Activated CD4-positive, alpha-beta memory T cell treated with anti-CD3 and anti-CD28 coated beads, Interleukin-2, amount 10 ng/mL, durations not matched to agents 7 days and 5 days (primary cell): ENCODE measurements at regions of chr6 and their contacts with region 1.

Region 1: DNA sequence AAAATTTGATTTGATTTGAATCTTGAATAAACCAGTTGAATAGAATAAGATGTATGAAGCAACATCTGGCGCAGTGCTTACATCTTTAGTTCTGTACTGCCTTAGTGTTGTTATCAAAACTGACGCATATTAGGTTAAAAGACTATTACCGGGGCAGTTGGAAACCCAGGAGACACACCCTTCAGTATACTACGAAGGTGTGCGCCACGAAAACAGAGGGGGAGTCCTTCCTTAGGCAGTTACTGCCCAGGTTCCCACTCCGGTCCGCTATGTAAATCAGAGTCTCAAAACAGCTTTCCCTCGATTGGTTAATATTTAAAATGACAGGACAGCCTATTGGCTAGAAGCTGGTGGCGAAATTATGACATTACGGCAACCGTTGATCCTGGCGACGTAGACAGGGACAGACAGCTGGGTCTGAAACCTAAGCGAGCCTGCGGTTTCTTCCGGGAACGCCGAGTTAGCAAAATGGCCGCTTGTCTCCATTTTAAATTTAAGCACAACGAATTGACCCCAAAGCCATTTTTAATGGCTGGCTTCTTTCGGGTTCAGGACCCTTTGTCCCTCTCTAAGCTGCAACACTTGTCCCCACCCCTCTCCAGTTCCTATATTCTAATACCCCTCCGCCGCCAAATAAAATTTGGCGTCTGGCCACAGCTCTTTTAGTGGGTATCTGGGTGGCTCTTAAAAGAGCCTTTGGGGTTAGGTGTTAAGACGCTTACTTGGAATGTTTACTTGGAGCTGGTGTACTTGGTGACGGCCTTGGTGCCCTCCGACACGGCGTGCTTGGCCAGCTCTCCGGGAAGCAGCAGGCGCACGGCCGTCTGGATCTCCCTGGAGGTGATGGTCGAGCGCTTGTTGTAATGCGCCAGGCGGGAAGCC is 35.8 kb downstream of the HFE start:
- DNase-seq: peak; percentile 95
- H3K4me3 Mint-ChIP-seq: peak overlapping the region; percentile 97
- H3K27ac Mint-ChIP-seq: peak overlapping the region; percentile 100
- H3K4me1 Mint-ChIP-seq: peaks cover 40% of the 10 kb centered on the region
- H3K27me3 Mint-ChIP-seq: no peaks in the 10 kb centered on the region

Region 2: GRCh38 chr6:26054857-26055669 is 68.0 kb before region 1 on chr6:
- CTCF ChIA-PET with region 1: no interaction called
- POLR2A ChIA-PET with region 1: interaction called, 276 read pairs
- DNase-seq: peak; percentile 92
- H3K4me3 Mint-ChIP-seq: peak overlapping the region; percentile 83
- H3K27ac Mint-ChIP-seq: peak overlapping the region; percentile 99
- H3K4me1 Mint-ChIP-seq: peaks cover 37% of the 10 kb centered on the region
- H3K27me3 Mint-ChIP-seq: no peaks in the 10 kb centered on the region

Region 3: GRCh38 chr6:26103770-26104456 is 19.1 kb before region 1 on chr6:
- CTCF ChIA-PET with region 1: interaction called, 17 read pairs
- POLR2A ChIA-PET with region 1: interaction called, 204 read pairs
- DNase-seq: peak; percentile 93
- H3K4me3 Mint-ChIP-seq: peak overlapping the region; percentile 80
- H3K27ac Mint-ChIP-seq: peak overlapping the region; percentile 99
- H3K4me1 Mint-ChIP-seq: peaks cover 23% of the 10 kb centered on the region
- H3K27me3 Mint-ChIP-seq: no peaks in the 10 kb centered on the region

Region 4: DNA sequence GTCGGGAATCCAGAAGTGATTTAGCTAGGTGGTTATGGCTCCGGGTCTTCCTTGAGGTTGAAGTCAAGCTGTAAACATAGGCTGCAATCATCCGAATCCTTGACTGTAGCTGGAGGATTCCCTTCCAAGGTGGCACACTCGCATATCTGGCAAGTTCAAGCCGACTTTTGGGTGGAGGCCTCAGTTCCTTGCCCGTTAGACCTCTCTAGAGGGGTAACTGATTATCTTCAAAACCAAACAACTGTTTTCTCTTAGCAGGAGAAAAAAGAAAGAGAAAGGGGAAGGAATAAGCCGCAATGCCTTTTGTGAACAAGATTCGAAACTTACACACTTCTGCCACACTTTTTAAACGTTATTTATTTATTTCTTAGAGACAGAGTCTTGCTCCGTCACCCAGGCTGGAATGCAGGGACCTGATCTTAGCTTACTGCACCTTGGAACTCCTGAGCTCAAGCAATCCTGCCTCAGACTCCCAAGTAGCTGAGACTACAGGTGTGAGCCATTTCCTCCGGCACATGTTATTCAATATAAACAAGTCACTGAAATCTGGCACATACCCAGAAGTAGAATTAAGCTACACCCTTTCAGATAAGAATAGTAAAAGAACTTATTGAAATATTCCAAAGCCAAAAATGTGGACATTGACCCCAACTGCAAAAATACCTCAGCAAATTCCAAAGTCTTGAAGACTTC is 40.5 kb after region 1 on chr6:
- CTCF ChIA-PET with region 1: interaction called, 65 read pairs
- POLR2A ChIA-PET with region 1: interaction called, 2,087 read pairs
- DNase-seq: no peak
- H3K4me3 Mint-ChIP-seq: no peak overlapping the region
- H3K27ac Mint-ChIP-seq: peak overlapping the region; percentile 42
- H3K4me1 Mint-ChIP-seq: peaks cover 60% of the 10 kb centered on the region
- H3K27me3 Mint-ChIP-seq: no peaks in the 10 kb centered on the region

Region 5: GRCh38 chr6:26204332-26205165 is 81.5 kb after region 1 on chr6:
- CTCF ChIA-PET with region 1: interaction called, 4 read pairs
- POLR2A ChIA-PET with region 1: interaction called, 499 read pairs
- DNase-seq: peak; percentile 90
- H3K4me3 Mint-ChIP-seq: no peak overlapping the region
- H3K27ac Mint-ChIP-seq: no peak overlapping the region
- H3K4me1 Mint-ChIP-seq: peaks cover 35% of the 10 kb centered on the region
- H3K27me3 Mint-ChIP-seq: no peaks in the 10 kb centered on the region

Region 6: GRCh38 chr6:26285143-26286134 is 162.4 kb after region 1 on chr6:
- CTCF ChIA-PET with region 1: no interaction called
- POLR2A ChIA-PET with region 1: interaction called, 54 read pairs
- DNase-seq: peak; percentile 98
- H3K4me3 Mint-ChIP-seq: peak overlapping the region; percentile 83
- H3K27ac Mint-ChIP-seq: peak overlapping the region; percentile 96
- H3K4me1 Mint-ChIP-seq: peaks cover 39% of the 10 kb centered on the region
- H3K27me3 Mint-ChIP-seq: peaks cover 4% of the 10 kb centered on the region

Region 7: DNA sequence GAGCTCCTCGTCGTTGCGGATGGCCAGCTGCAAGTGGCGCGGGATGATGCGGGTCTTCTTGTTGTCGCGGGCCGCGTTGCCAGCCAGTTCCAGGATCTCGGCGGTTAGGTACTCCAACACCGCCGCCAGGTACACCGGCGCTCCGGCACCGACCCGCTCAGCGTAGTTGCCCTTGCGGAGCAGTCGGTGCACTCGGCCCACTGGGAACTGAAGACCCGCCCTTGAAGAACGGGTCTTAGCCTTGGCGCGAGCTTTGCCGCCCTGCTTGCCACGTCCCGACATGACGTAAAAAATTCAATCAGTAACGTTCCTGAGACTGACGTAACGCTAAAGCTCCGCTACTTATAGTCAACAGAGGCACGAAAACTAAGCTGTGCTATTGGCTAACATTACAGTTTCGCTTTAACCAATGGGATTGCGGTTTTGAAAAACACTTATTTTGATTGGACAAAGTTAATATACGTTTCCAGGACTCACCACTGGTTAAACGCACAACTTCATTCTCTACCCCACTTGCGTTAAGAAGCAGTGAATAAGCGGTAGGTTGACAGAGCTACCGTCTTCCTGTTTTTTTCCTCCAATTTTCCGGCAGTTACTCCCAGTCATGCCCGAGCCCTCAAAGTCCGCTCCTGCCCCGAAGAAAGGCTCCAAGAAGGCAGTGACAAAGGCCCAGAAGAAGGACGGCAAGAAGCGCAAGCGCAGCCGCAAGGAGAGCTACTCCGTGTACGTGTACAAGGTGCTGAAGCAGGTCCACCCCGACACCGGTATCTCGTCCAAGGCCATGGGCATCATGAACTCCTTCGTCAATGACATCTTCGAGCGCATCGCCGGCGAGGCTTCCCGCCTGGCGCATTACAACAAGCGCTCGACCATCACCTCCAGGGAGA is 1715.3 kb after region 1 on chr6:
- CTCF ChIA-PET with region 1: no interaction called
- POLR2A ChIA-PET with region 1: interaction called, 26 read pairs
- DNase-seq: peak; percentile 90
- H3K4me3 Mint-ChIP-seq: no peak overlapping the region
- H3K27ac Mint-ChIP-seq: no peak overlapping the region
- H3K4me1 Mint-ChIP-seq: peaks cover 31% of the 10 kb centered on the region
- H3K27me3 Mint-ChIP-seq: no peaks in the 10 kb centered on the region